ENCODE measurements at regions of chr2 and their contacts with region 1.

Region 1: GRCh38 chr2:216713691-216714336 is 18.5 kb upstream of the IGFBP5 start:
- DNase-seq: no peak

Region 2: GRCh38 chr2:216774620-216775019 is 60.8 kb after region 1 on chr2:
- intact Hi-C with region 1: loop called in 1 of 2 experiments (anchors 5 kb)
- DNase-seq: peak; percentile 90